ENCODE measurements at regions of chr17 and their contacts with region 1.

Region 1: DNA sequence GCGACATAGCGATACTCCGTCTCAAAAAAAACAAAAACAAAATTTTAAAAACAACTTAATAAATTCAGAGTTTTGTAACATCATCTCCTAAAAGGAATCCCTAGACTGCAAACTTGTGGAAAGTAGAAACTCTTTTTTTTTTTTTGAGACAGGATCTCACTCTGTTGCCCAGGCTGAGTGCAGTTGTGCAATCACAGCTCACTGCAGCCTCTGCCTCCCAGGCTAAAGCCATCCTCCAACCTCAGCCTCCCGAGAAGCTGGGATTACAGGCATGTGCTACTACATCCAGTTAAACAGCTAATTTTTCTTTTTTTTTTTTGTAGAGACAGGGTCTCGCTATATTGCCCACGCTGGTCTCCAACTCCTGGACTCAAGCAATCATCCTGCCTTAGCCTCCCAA is 19.7 kb downstream of the EZH1 start:
- DNase-seq: no peak
- H3K27ac ChIP-seq: no peak overlapping the region
- CTCF ChIP-seq: no peak

Region 2: GRCh38 chr17:42361781-42362186 is 363.4 kb before region 1 on chr17:
- CTCF ChIA-PET with region 1: no interaction called
- POLR2A ChIA-PET with region 1: no interaction called
- DNase-seq: no peak
- H3K27ac ChIP-seq: no peak overlapping the region
- CTCF ChIP-seq: no peak

Region 3: DNA sequence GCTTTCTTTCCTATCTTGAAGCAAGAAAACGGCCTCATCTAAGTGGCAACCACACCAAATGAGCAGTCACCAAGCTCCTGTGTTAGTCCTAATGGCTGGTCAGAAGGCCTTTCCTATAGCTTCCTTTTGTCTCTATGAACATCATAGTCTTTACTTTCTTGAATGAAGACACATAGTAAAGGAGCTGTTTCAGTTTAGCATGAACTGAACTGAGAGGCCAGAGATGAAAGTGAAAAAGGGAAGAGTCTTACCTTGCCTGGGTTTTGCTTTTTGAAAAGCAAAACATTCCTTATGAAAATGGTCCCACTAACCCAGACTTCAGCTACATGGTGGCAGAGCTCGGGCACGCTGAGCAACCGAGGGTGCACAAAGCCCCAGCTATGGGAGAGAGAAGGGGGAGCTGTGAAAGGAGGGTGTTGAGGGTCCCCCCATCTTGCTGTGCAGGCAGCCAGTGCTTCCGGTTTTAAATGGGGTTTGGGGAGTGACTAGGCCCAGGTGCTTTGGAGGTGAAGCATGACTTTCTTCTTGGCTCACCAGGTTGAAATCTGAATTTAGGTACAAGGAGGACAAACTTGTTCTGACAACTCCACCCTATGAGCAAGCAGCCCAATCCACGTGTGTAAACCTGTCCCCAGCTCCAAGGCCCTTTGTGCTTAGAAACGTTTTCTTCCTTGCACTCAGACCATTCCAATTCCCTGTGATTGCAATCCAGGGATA is 138.5 kb before region 1 on chr17:
- CTCF ChIA-PET with region 1: interaction called, 11 read pairs
- POLR2A ChIA-PET with region 1: no interaction called
- DNase-seq: peak; percentile 89
- H3K27ac ChIP-seq: peak overlapping the region; percentile 85
- CTCF ChIP-seq: no peak